Endothelial cell of umbilical vein (primary cell): ENCODE measurements at regions of chr14 and their contacts with region 1.

Region 1: DNA sequence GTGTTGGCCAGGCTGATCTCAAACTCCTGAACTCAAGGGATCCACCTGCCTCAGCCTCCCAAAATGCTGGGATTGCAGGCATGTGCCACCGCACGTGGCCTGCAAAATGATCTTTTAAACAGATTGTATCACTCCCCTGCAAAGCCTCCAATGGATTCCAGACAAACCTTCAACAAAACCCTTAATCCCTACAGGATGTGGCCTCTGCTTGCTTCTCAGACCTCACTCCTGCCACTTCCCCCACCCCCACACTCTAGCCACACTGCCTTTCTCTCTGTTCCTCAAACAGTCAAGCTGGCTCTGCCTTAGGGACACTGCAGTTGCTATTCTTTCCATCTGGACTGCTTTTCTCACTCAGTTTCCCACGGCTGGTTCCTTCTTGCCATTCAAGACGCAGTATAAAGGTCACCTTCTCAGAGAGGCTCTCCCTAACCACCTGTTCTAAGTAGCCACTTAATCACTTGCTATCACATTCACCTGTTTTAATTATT is 47.3 kb upstream of the TMED10 start:
- DNase-seq: no peak
- H3K4me3 ChIP-seq: no peak overlapping the region
- H3K27ac ChIP-seq: no peak overlapping the region
- H3K4me1 ChIP-seq: peaks cover 13% of the 10 kb centered on the region
- H3K27me3 ChIP-seq: no peaks in the 10 kb centered on the region
- CTCF ChIP-seq: no peak
- POLR2A ChIP-seq: no peak

Region 2: DNA sequence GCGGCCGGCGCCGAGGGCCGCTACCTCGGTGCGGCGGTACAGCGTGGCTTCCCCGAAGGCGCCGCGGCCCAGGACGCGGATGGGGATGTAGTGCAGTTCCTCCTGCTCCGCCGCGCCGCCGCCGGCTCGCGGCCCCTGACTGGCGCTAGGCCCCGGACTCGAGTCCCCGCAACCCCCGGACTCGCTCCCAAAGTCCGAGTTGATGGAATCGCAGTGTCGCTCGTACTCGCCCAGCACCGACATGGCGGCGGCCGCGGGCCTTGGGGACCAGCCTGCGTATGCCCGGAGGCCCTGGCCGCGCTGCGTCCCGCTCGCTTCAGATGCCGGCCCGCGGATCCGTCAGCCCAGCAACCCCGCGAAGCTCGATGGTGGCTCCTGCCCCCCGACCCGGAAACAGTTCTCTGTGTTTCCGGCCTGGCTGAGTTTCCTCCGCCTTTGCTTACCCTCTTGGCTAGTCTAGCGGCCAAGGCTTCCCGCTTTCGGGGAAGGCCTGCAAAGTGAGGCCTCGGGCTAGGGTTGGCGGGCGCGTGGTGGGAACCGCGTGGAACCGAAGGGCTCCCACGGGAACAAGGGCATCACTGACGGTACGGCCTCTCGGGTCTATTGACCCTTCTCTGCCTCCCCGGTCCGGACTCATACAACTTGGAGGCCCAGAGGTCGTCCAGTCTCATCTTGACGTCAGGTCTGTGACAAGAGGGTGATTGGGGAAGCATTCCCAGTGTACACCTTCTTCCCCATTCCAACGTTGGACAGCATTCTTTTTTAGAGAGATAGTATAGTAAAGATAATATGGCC is 96.8 kb before region 1 on chr14 and contains the start of gene NEK9:
- CTCF ChIA-PET with region 1: no interaction called
- POLR2A ChIA-PET with region 1: no interaction called
- dilution Hi-C with region 1: no loop called
- intact Hi-C with region 1: loop called (anchors 1 kb)
- DNase-seq: peak; percentile 89
- H3K4me3 ChIP-seq: peak within 1 kb of the TSS; percentile 36 to 69 (median 62)
- H3K27ac ChIP-seq: peak within 1 kb of the TSS; percentile 95
- H3K4me1 ChIP-seq: peaks cover 45% of the 10 kb centered on the region
- H3K27me3 ChIP-seq: no peaks in the 10 kb centered on the region
- CTCF ChIP-seq: no peak
- POLR2A ChIP-seq: peak; percentile 93
- total RNA-seq, gene NEK9: 65.1 and 69.6 TPM in 2 replicates

Region 3: GRCh38 chr14:75205591-75205990 is 18.1 kb before region 1 on chr14:
- CTCF ChIA-PET with region 1: interaction called, 4 read pairs
- POLR2A ChIA-PET with region 1: interaction called, 3 read pairs
- dilution Hi-C with region 1: no loop called
- intact Hi-C with region 1: loop called (anchors 2 kb)
- DNase-seq: peak; percentile 82
- H3K4me3 ChIP-seq: no peak overlapping the region
- H3K27ac ChIP-seq: peak overlapping the region; percentile 74
- H3K4me1 ChIP-seq: peaks cover 15% of the 10 kb centered on the region
- H3K27me3 ChIP-seq: no peaks in the 10 kb centered on the region
- CTCF ChIP-seq: no peak
- POLR2A ChIP-seq: no peak

Region 4: GRCh38 chr14:75234173-75235115 is 10.7 kb after region 1 on chr14:
- CTCF ChIA-PET with region 1: interaction called, 3 read pairs
- POLR2A ChIA-PET with region 1: no interaction called
- dilution Hi-C with region 1: no loop called
- intact Hi-C with region 1: loop called (anchors 1 kb)
- DNase-seq: peak; percentile 92
- H3K4me3 ChIP-seq: no peak overlapping the region
- H3K27ac ChIP-seq: peak overlapping the region; percentile 91
- H3K4me1 ChIP-seq: peaks cover 23% of the 10 kb centered on the region
- H3K27me3 ChIP-seq: no peaks in the 10 kb centered on the region
- CTCF ChIP-seq: no peak
- POLR2A ChIP-seq: no peak

Region 5: DNA sequence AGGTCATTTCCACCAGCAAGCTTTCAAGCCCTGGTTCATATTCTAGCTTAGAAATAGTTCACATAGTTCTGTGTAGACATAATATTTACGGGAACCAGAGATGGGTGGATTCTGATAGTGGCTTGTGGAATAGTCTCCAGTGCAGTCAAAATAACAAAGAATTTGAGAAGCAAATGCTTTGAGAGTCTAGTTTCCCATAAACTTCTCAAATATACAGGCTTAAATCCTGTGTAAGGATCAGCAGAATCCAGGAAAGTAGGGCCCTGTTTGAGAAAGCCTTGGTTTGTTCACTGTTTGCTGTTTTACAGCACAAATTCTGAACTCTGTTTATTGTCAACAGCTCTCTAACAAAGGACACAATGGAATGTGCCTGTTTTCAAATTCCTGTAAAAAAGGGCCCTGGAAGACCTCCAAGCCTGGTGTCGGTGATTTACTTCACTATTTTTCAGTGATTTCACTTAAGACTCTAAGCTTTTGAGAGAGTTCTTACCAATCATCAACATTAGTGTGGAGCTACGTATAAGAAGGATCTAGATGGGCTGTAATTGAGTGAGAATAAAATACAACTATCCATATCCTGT is 43.5 kb after region 1 on chr14:
- CTCF ChIA-PET with region 1: no interaction called
- POLR2A ChIA-PET with region 1: no interaction called
- dilution Hi-C with region 1: no loop called
- intact Hi-C with region 1: no loop called
- DNase-seq: peak; percentile 79
- H3K4me3 ChIP-seq: no peak overlapping the region
- H3K27ac ChIP-seq: peak overlapping the region; percentile 17
- H3K4me1 ChIP-seq: peaks cover 7% of the 10 kb centered on the region
- H3K27me3 ChIP-seq: no peaks in the 10 kb centered on the region
- CTCF ChIP-seq: no peak
- POLR2A ChIP-seq: no peak